AG04449 (cell line): ENCODE measurements at regions of chr17 and their contacts with region 1.

Region 1: GRCh38 chr17:44775136-44775837 is 16.5 kb downstream of the ADAM11 start:
- DNase-seq: peak; percentile 76
- H3K4me3 ChIP-seq: peak overlapping the region; percentile 77
- CTCF ChIP-seq: no peak

Region 2: DNA sequence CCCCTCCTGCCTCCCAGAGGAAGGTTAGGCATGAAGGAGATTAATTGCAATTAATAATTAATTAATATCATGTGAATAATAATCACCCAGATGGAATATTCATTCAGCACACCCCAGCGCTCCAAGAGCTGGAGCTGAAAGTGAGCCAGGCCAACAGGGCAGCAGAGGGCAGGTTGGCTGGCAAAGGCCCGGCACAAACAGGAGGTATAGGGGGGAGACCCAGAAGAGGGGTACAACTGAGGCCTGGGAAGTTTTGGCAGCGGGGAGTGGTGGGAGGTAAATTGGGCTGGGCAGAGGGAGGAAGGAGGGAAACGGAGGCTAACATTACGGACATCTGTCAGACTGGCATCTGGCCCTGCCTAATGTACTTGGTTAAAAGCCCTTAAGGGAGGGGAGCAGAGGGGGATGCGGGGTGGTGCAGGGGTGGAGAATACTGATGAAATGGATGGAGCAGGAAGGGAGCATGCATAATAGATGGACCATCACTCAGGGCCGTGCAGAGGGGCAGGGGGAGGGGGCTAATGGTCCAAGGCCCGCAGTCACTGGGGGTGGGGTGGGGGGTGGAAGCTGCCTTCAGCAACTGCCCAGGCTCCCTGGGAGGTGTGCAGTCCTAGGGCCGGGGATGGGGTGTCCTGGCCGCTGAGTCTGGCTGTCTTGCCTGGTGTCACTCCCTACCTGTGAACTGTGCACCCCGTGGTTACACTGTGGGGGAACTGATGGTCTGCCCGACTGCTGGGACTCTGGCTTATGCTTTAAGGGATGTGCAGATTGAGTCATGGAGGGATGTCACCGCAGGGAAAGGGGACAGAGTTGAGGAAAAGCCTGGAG is 14.6 kb before region 1 on chr17:
- CTCF ChIA-PET with region 1: interaction called, 27 read pairs
- POLR2A ChIA-PET with region 1: no interaction called
- DNase-seq: no peak
- H3K4me3 ChIP-seq: no peak overlapping the region
- CTCF ChIP-seq: no peak

Region 3: DNA sequence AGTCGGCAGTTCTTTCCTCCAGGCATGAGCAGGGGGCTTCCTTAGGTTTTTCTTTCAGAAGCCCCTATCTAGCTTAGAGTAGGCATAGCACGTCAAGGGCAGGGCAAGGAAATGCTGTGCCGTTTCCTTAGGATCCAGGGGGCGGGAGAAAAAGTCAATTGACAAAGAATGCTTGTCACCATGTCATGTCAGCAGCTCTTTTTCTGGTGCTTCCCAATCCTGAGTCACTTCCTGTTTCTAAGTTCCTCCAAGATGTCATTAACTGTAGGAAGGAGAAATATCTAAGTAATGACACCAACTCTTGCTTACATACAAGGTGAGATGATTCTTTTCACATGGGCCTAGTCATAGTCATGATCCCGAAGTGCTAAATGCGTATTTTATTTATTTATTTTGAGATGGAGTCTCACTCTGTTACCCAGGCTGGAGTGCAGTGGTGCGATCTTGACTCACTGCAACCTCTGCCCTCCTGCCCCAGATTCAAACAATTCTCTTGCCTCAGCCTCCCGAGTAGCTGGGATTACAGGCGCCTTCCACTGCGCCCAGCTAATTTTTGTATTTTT is 19.6 kb after region 1 on chr17:
- CTCF ChIA-PET with region 1: interaction called, 180 read pairs
- POLR2A ChIA-PET with region 1: interaction called, 3 read pairs
- DNase-seq: peak; percentile 71
- H3K4me3 ChIP-seq: no peak overlapping the region
- CTCF ChIP-seq: no peak

Region 4: DNA sequence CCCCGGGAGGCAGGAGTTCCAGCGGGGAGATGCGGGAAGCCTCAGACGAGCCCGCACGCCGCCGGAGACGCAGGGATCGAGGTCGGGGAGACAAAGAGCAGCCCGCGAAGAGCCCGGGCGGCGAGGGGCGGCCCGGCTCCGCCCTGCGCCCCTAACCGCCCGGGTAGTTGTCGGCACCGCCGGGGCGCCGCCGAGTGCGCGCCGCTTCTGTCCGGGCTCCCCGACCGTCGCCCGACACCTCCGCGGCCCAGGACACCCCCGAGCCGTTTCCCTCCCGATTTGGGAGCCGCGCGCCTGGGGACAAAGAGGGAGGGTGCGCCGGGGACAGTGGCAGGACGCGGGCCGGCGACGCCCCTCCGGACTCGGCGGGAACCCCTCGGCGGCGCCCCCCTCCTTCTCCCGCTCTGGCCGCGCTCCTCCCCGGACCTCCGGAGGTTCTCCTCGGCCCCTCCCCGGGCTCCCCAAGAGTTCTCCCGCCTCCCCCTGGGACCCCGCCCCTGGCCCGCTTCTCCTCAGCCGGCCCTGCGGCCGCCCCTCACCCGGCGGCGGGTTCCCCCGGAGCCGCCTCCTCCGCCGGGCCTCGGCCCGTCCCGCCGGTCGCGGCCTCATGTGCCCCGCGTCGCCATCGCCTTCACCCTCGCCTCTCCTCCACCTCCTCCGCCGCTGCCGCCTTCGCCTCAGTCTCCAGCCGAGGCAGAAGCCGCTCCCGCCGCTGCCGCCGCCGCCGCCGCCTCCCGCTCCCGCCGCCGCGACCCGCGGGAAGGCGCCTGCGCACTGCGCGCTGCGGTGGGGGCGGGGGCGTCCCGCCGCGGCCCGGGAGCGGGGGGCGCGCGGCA is 54.5 kb after region 1 on chr17 and contains the start of gene GJC1:
- CTCF ChIA-PET with region 1: interaction called, 21 read pairs
- POLR2A ChIA-PET with region 1: no interaction called
- DNase-seq: no peak
- H3K4me3 ChIP-seq: peak within 1 kb of the TSS; percentile 82
- CTCF ChIP-seq: no peak

Region 5: DNA sequence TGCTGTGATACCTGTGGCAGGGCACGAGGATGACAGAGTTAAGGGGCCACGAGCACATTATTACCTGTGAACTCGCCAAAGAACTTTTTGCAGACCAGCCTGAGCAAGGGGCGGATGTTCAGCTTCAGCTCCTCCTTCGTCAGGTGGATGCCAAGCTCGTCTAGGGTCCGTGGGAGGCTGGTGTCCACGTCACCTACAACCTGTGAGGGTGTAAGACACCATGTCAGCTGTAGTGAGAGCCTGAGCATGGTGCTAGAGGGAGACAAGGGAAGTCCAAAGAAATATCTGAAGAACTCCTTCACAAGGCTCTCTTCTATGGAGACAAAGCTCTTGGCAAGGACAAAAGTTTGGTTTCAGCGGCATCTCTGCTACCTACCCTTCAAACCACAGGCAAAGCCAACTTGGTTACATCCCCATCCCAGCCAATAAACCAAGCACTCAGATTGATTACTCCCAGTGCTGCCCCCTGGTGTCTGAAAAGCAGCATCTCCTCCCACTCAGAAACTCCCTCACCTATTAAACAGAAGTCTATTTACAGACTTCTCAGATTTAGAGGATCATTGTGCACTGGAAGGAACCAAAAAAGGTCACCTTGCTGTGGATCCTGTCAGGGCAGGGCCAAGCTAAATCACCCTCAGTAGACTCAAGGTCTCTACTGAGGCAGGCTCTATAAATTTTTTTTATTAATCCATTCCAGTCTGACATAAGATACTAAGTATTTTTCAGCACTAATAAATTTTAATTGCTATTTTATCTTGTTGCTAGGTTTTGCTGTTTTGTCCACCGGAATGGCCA is 89.8 kb after region 1 on chr17:
- CTCF ChIA-PET with region 1: interaction called, 823 read pairs
- POLR2A ChIA-PET with region 1: interaction called, 3 read pairs
- DNase-seq: no peak
- H3K4me3 ChIP-seq: no peak overlapping the region
- CTCF ChIP-seq: peak; percentile 70

Region 6: DNA sequence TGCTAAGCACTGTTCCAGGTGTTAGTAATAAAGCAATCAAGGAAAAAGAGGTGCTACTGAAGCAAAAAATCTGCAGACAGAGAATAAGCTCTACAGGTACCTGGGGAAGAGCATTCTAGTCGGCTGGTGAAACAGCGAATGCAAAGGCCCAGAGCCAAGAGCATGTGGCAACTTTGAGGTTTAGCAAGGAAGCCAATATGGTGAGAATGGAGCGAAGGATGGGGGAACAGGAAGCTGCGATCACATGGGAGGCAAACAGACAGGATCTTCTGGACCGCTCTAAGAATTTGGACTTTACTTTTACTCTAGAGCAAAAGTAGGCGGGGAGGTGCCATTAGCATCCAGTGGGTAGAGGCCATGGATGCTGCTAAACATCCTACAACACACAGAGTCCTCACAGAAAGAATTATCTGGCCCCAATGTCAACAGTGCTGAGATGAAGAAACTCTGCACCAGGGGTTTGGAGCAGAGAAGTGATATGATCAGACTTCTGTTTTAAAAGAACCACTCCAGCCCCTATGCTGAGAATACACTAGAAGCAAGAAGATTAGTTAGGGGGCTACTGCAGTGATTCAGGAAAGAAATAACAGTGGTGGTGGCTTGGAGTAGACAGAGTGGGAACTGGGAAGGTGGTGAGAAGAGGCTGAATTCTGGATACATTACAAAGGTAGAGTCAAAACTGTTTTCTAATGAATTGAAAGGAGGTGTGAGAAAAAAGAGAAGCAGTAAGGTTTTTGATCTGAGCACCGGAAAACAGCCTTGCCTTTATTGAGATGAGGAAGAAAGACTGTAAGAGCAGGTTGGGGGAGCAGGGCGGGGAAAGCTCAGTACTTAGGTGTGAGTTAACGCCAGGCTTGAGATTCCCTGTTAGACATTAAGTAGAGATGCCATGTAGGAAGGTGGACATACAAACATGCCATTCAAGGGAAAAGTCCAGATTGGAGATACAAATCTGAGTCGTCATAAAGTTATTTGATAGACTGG is 113.0 kb after region 1 on chr17:
- CTCF ChIA-PET with region 1: interaction called, 78 read pairs
- POLR2A ChIA-PET with region 1: no interaction called
- DNase-seq: no peak
- H3K4me3 ChIP-seq: no peak overlapping the region
- CTCF ChIP-seq: no peak